ENCODE measurements at regions of chr3 and their contacts with region 1.

Region 1: GRCh38 chr3:184017672-184018423 is at the start of gene ABCC5:
- DNase-seq: peak; percentile 87
- ATAC-seq: peak; percentile 95
- H3K4me3 Mint-ChIP-seq: peak within 1 kb of the TSS; percentile 98
- H3K27ac Mint-ChIP-seq: peak within 1 kb of the TSS; percentile 91
- H3K4me1 Mint-ChIP-seq: peaks cover 32% of the 10 kb centered on the region
- H3K27me3 Mint-ChIP-seq: peaks cover 13% of the 10 kb centered on the region
- total RNA-seq, gene ABCC5: 16.7 to 19.6 TPM

Region 2: DNA sequence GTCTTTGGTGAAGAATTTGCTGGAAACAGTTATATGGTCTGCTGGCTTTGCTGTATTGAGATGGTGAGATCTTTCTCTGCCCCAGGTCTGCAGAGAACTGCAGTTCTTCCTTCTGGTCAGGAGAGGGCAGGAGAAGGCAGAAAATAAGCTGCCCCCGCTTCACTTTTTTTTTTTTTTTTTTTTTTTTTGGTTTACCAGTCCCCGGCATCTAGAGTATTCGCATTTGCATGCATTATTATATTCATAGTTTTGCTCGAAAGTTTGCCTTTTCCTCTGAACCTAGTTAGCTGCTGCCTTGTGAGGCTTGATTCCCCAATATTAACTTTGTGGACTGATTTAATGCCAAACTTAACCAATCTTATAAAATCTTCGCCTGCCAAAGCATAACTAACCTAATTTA is 122.6 kb before region 1 on chr3:
- CTCF ChIA-PET with region 1: interaction called, 24 read pairs
- POLR2A ChIA-PET with region 1: no interaction called
- DNase-seq: peak; percentile 56
- ATAC-seq: peak; percentile 62
- H3K4me3 Mint-ChIP-seq: no peak overlapping the region
- H3K27ac Mint-ChIP-seq: no peak overlapping the region
- H3K4me1 Mint-ChIP-seq: peaks cover 2% of the 10 kb centered on the region
- H3K27me3 Mint-ChIP-seq: peaks cover 7% of the 10 kb centered on the region

Region 3: GRCh38 chr3:183904833-183905780 is 112.7 kb before region 1 on chr3:
- CTCF ChIA-PET with region 1: interaction called, 11 read pairs
- POLR2A ChIA-PET with region 1: no interaction called
- DNase-seq: no peak
- ATAC-seq: no peak
- H3K4me3 Mint-ChIP-seq: no peak overlapping the region
- H3K27ac Mint-ChIP-seq: no peak overlapping the region
- H3K4me1 Mint-ChIP-seq: no peaks in the 10 kb centered on the region
- H3K27me3 Mint-ChIP-seq: no peaks in the 10 kb centered on the region

Region 4: GRCh38 chr3:184005941-184006507 is 11.8 kb before region 1 on chr3:
- CTCF ChIA-PET with region 1: interaction called, 17 read pairs
- POLR2A ChIA-PET with region 1: no interaction called
- DNase-seq: no peak
- ATAC-seq: no peak
- H3K4me3 Mint-ChIP-seq: no peak overlapping the region
- H3K27ac Mint-ChIP-seq: no peak overlapping the region
- H3K4me1 Mint-ChIP-seq: peaks cover 10% of the 10 kb centered on the region
- H3K27me3 Mint-ChIP-seq: no peaks in the 10 kb centered on the region

Measured in activated CD8-positive, alpha-beta T cell treated with anti-CD3 and anti-CD28 coated beads, Interleukin-2, amount 10 ng/mL, durations not matched to agents 7 days and 5 days (primary cell).